ENCODE measurements at regions of chr5 and their contacts with region 1.

Region 1: DNA sequence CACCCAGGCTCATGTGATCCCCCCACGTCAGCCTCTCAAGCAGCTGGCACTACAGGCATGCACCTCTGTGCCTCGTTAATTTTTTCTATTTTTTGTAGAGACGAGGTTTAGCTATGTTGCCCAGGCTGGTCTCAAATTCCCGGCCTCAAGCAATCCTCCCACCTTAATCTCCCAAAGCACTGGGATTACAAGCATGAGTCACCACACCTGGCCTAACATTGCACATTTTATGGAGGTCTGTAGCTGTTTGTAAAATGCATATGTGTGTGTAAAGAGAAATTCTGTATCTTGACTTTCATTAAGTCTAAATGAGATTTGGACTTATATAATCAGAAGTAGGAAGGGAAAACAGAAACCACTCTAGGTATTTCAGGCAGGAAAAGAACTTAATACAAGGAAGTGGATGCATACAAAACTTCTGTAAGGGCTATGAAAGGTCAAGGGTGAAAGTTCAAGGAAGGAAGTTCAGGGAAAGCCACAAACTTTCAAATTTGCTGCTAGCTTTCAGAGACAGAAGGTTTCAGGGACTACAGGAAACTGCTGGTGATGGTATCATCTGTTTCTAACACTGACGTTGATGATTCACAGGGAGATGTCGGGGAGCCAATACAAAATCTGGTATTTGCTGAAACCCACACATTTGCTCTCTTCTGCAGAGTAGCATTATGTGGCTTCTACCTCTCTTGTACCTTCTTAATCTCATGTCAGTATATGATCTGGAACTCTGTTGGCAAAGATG is 209.4 kb downstream of the PIK3R1 start:
- DNase-seq: peak in 7 of 9 donors; percentile 21 to 58 (median 45)
- ATAC-seq: peak; percentile 80
- H3K4me3 ChIP-seq: peak overlapping the region; percentile 14
- H3K4me3 Mint-ChIP-seq: peak overlapping the region in 8 of 10 donors; percentile 8 to 63 (median 39)
- H3K27ac ChIP-seq: peak overlapping the region; percentile 27
- H3K27ac Mint-ChIP-seq: peak overlapping the region; percentile 38 to 91 (median 77)
- H3K4me1 ChIP-seq: peaks cover 8 to 20% of the 10 kb centered on the region in 2 donors
- H3K4me1 Mint-ChIP-seq: peaks cover 11 to 37% (median 22%) of the 10 kb centered on the region in 7 donors
- H3K27me3 ChIP-seq: no peaks in the 10 kb centered on the region
- H3K27me3 Mint-ChIP-seq: peaks cover 0 to 7% (median 0%) of the 10 kb centered on the region in 5 donors

Region 2: DNA sequence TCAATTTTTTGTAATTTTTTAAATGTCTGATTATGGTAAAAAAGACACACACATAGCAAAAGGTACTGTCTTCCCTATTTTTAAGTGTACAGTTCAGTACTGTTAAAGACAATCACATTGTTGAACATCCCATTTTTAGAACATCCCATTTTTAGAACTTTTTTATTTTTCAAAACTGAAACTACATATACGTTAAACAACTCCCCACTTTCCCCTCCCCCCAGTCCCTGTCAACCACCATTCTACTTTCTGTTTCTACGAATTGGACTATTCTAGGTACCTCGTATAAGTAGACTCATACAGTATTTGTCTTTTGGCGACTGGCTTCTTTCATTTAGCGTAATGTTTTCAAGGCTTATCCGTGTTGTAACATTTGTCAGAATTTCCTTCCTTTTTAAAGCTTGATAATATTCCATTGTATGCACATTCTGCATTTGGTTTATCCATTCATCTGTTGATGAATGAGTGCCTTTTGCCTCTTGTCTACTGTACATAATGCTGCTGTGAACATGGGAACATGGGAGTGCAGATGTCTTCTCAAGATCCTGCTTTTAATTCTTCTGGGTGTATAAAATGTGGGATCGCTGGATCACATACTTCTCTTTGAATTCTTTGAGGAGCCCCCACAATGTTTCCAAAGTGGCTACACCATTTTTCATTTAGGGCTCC is 55.4 kb before region 1 on chr5:
- CTCF ChIA-PET with region 1: no interaction called
- POLR2A ChIA-PET with region 1: no interaction called
- intact Hi-C with region 1: loop called (anchors 1 to 5 kb)
- DNase-seq: peak in 7 of 9 donors; percentile 17 to 52 (median 50)
- ATAC-seq: peak; percentile 83
- H3K4me3 ChIP-seq: peak overlapping the region; percentile 26
- H3K4me3 Mint-ChIP-seq: peak overlapping the region; percentile 36 to 84 (median 76)
- H3K27ac ChIP-seq: no peak overlapping the region
- H3K27ac Mint-ChIP-seq: peak overlapping the region; percentile 23 to 91 (median 68)
- H3K4me1 ChIP-seq: peaks cover 0 to 16% of the 10 kb centered on the region in 2 donors
- H3K4me1 Mint-ChIP-seq: peaks cover 6 to 51% (median 29%) of the 10 kb centered on the region in 7 donors
- H3K27me3 ChIP-seq: no peaks in the 10 kb centered on the region
- H3K27me3 Mint-ChIP-seq: peaks cover 0 to 6% (median 0%) of the 10 kb centered on the region in 5 donors

Region 3: DNA sequence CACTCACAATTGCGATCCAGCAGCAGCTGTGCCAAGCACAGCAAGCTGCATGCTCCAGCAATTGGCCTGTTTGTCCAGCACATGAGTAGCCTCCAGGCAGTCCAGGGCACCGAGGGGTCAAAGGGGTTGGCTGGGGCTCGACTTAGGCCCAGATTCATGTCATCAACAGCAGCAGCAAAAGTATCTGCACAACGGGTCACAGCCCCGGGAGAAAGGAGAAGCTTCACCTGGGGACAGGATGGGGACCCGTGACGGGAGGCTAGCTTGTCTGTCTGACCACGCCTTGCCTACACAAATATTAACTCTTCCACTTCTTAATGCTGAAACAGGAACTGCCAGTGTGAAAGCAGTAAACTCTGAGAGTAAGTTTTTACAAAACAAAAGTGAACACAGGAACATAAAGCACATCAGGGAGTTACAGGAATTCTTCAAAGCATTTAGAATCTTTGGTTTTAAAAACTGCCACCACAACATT is 18.2 kb before region 1 on chr5:
- CTCF ChIA-PET with region 1: interaction called, 3 read pairs
- POLR2A ChIA-PET with region 1: no interaction called
- intact Hi-C with region 1: loop called in 1 of 2 experiments (anchors 2 kb)
- DNase-seq: peak in 3 of 9 donors; percentile 2 to 29 (median 11)
- ATAC-seq: peak; percentile 40
- H3K4me3 ChIP-seq: no peak overlapping the region
- H3K4me3 Mint-ChIP-seq: peak overlapping the region in 7 of 10 donors; percentile 5 to 66 (median 52)
- H3K27ac ChIP-seq: no peak overlapping the region
- H3K27ac Mint-ChIP-seq: peak overlapping the region in 8 of 9 donors; percentile 34 to 87 (median 54)
- H3K4me1 ChIP-seq: peaks cover 8 to 18% of the 10 kb centered on the region in 2 donors
- H3K4me1 Mint-ChIP-seq: peaks cover 12 to 26% (median 14%) of the 10 kb centered on the region in 7 donors
- H3K27me3 ChIP-seq: no peaks in the 10 kb centered on the region
- H3K27me3 Mint-ChIP-seq: peaks cover 0 to 2% (median 0%) of the 10 kb centered on the region in 5 donors

Measured in naive thymus-derived CD4-positive, alpha-beta T cell (primary cell).